ENCODE measurements at regions of chr7 and their contacts with region 1.

Region 1: GRCh38 chr7:51141451-51142003 is 175.1 kb downstream of the COBL start:
- DNase-seq: peak; percentile 60
- H3K27ac ChIP-seq: no peak overlapping the region
- CTCF ChIP-seq: peak; percentile 63

Region 2: GRCh38 chr7:50467817-50468610 is 673.5 kb before region 1 on chr7:
- CTCF ChIA-PET with region 1: interaction called, 15 read pairs
- POLR2A ChIA-PET with region 1: no interaction called
- DNase-seq: peak; percentile 78
- H3K27ac ChIP-seq: no peak overlapping the region
- CTCF ChIP-seq: peak; percentile 96

Region 3: GRCh38 chr7:50799873-50800272 is 341.7 kb before region 1 on chr7:
- CTCF ChIA-PET with region 1: interaction called, 10 read pairs
- POLR2A ChIA-PET with region 1: no interaction called
- DNase-seq: no peak
- H3K27ac ChIP-seq: no peak overlapping the region
- CTCF ChIP-seq: no peak